Activated T-helper 1 cell treated with anti-CD3 and anti-CD28 coated beads, Interleukin-12 subunit alpha, Interleukin-12 subunit beta, Interleukin-2, Interleukin-4 antibody, amounts not matched to agents 30 ng/mL and 10 ng/mL and 1 ng/mL, durations not matched to agents 14 hours and 24 hours and 36 hours (primary cell): ENCODE measurements at regions of chr20 and their contacts with region 1.

Region 1: GRCh38 chr20:49620364-49621240 is 52.7 kb upstream of the PTGIS start:
- DNase-seq: peak; percentile 4
- H3K4me3 Mint-ChIP-seq: no peak overlapping the region
- H3K27ac Mint-ChIP-seq: peak overlapping the region; percentile 16
- H3K4me1 Mint-ChIP-seq: peaks cover 8% of the 10 kb centered on the region
- H3K27me3 Mint-ChIP-seq: peaks cover 10% of the 10 kb centered on the region

Region 2: GRCh38 chr20:49631061-49631788 is 10.6 kb after region 1 on chr20:
- intact Hi-C with region 1: loop called (anchors 1 kb)
- DNase-seq: no peak
- H3K4me3 Mint-ChIP-seq: no peak overlapping the region
- H3K27ac Mint-ChIP-seq: peak overlapping the region; percentile 46
- H3K4me1 Mint-ChIP-seq: peaks cover 19% of the 10 kb centered on the region
- H3K27me3 Mint-ChIP-seq: no peaks in the 10 kb centered on the region

Region 3: GRCh38 chr20:49990271-49990720 is 369.7 kb after region 1 on chr20:
- intact Hi-C with region 1: no loop called
- DNase-seq: no peak
- H3K4me3 Mint-ChIP-seq: no peak overlapping the region
- H3K27ac Mint-ChIP-seq: no peak overlapping the region
- H3K4me1 Mint-ChIP-seq: no peaks in the 10 kb centered on the region
- H3K27me3 Mint-ChIP-seq: peaks cover 19% of the 10 kb centered on the region